Common myeloid progenitor, CD34-positive (primary cell): ENCODE measurements at regions of chr1 and their contacts with region 1.

Region 1: DNA sequence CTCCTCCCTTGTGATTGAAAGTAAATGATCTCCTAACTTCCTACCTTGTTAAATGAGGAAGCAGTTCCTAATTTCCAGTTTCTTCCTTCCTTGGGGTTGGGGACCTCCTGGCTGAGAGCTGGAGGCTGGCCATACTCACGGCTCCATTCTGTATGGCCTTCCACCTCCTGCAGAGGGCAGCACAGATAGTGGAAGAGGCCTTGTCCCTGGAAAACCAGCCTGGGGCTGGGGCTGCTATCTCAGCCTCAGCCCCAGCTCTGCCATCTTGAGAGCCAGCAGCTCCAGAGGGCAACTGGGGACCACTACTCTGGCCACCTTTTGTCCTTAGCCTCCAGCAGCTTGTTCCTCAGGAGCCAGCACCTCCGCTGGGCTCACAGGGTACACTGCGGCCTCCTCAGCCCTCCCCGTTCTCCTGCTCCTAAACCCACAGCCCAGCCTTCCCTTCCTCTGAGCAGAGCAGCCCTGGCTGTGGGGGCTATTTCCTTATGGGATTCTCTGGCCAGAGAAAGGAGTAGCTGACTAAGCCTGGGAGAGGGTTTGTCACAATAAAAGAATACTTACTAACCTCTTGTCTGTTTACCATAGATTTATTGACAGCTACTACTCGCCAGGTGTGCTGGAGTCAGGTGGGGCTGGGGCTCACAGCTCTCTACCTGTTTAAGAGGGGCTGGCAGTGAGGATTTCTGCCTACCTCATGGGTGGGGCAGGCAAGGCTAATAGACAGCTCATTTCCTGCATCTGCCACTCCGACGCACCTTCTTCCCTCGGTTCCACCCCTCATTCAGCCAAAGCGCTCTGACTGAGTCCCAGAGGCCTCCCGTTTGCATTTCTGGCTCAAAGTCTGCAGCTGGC is 6.3 kb downstream of the TMEM234 start:
- DNase-seq: peak; percentile 57 to 75 (median 62)
- H3K4me3 ChIP-seq: no peak overlapping the region
- H3K27ac ChIP-seq: no peak overlapping the region
- H3K4me1 ChIP-seq: peaks cover 0 to 2% (median under 1%) of the 10 kb centered on the region in 4 experiments
- H3K27me3 ChIP-seq: no peaks in the 10 kb centered on the region

Region 2: GRCh38 chr1:32205401-32206370 is 10.2 kb before region 1 on chr1 and contains the start of gene IQCC:
- CTCF ChIA-PET with region 1: interaction called, 48 read pairs
- POLR2A ChIA-PET with region 1: interaction called, 3 read pairs
- DNase-seq: peak; percentile 81 to 88 (median 87)
- H3K4me3 ChIP-seq: peak within 1 kb of the TSS; percentile 50 to 87 (median 82)
- H3K27ac ChIP-seq: peak within 1 kb of the TSS; percentile 54 to 78
- H3K4me1 ChIP-seq: peaks cover 3 to 36% (median 33%) of the 10 kb centered on the region in 4 experiments
- H3K27me3 ChIP-seq: no peaks in the 10 kb centered on the region

Region 3: GRCh38 chr1:32240140-32240951 is 24.5 kb after region 1 on chr1:
- CTCF ChIA-PET with region 1: interaction called, 50 read pairs
- POLR2A ChIA-PET with region 1: interaction called, 6 read pairs
- DNase-seq: peak; percentile 49 to 62 (median 54)
- H3K4me3 ChIP-seq: peak overlapping the region; percentile 29 to 79 (median 65)
- H3K27ac ChIP-seq: no peak overlapping the region
- H3K4me1 ChIP-seq: peaks cover 0 to 25% (median 18%) of the 10 kb centered on the region in 4 experiments
- H3K27me3 ChIP-seq: peaks cover 0 to 5% (median 0%) of the 10 kb centered on the region in 5 experiments

Region 4: DNA sequence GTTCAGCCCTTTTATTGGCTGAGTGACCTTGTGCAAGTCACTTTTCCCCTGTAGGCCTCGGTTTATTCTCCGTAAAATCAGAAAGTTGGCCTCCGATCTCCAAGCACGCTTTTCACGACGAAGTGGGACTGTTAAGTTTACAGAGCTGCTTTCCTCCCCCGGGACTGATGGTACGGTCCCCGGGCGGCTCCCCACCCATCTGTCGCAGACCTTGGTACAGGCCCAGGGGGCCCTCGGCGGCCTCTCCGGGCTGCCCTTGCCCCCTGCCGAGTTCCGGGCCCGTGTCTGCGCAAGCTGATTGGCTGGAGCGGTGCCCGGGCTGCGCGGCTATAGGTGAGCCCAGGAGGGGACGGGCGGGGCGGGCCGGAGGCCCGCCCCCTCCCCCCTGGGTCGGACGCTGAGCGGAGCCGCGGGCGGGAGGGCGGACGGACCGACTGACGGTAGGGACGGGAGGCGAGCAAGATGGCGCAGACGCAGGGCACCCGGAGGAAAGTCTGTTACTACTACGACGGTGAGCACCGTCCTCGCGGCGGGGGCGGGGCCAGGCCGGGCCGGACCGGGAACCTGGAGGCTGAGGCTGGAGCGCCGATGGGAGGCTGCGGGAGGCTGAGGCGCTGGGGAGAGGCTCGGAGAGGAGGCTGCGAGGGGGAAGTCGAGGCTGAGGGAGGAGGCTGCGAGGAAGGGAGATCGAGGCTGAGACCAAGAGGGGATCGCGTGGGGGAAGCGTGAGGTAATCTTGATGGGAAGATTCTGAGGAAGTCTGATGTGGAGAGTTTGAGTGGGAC is 76.0 kb after region 1 on chr1 and contains the start of gene HDAC1:
- CTCF ChIA-PET with region 1: interaction called, 16 read pairs
- POLR2A ChIA-PET with region 1: no interaction called
- DNase-seq: peak; percentile 98 to 99 (median 99)
- H3K4me3 ChIP-seq: peak within 1 kb of the TSS; percentile 91 to 99 (median 95)
- H3K27ac ChIP-seq: peak within 1 kb of the TSS; percentile 54 to 89
- H3K4me1 ChIP-seq: peaks cover 0 to 17% (median 12%) of the 10 kb centered on the region in 4 experiments
- H3K27me3 ChIP-seq: no peaks in the 10 kb centered on the region

Region 5: GRCh38 chr1:32372149-32372756 is 156.4 kb after region 1 on chr1:
- CTCF ChIA-PET with region 1: interaction called, 16 read pairs
- POLR2A ChIA-PET with region 1: interaction called, 5 read pairs
- DNase-seq: peak; percentile 74 to 94 (median 94)
- H3K4me3 ChIP-seq: no peak overlapping the region
- H3K27ac ChIP-seq: no peak overlapping the region
- H3K4me1 ChIP-seq: peaks cover 0 to 16% (median 10%) of the 10 kb centered on the region in 4 experiments
- H3K27me3 ChIP-seq: no peaks in the 10 kb centered on the region

Region 6: DNA sequence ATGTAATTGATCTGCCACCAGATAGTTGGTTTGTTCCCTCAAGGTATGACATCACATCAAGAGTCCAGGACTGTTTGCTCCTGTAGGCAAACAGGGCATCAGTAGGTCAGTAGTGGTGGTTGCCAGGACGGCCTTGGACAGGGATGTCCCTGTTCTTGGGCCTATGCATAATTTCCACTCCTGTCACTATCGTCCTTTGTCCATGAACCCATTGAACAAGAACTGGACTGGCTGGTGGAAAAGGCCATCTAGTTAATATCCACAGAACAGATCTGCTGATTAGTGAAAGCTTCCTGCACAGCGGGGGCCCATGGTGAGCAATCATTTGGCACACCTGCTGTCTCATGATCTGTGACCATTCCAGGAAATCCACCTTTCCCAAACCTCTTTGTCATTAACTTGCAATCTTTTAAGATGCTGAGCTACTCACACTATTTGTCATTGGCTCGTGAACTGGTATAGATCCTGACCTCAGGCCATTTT is 190.8 kb after region 1 on chr1:
- CTCF ChIA-PET with region 1: no interaction called
- POLR2A ChIA-PET with region 1: no interaction called
- DNase-seq: no peak
- H3K4me3 ChIP-seq: no peak overlapping the region
- H3K27ac ChIP-seq: no peak overlapping the region
- H3K4me1 ChIP-seq: no peaks in the 10 kb centered on the region
- H3K27me3 ChIP-seq: peaks cover 0 to 4% (median 0%) of the 10 kb centered on the region in 5 experiments